ENCODE measurements at regions of chr20 and their contacts with region 1.

Region 1: DNA sequence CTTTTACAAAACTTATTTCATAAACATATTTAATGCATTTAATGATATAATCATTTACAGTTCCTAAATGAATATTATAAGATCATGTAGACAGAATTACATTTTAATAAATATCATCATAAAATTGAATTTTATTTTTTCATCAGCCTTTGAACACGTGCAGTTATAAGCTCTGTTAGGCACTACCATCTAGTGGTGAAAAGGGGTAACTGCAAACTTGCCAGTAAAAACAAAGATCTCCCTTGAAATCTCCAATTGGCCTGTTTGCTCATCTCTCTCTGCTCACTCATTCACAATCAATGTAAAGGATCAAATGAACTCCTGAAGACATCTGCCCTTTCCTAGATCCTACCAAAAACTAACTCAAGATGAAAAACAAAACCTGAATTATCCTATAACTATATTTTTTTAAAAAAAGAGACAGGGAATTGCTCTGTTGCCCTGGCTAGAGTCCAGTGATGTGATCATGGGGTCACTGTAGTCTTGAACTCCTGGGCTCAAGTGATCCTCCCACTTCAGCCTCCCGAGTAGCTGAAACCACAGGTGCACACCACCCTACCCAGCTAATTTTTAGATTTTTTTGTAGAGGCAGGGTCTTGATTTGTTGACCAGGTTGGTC is 31.7 kb downstream of the SAMHD1 start:
- DNase-seq: peak in 14 of 35 experiments; percentile 5 to 77 (median 26)
- ATAC-seq: peak; percentile 71 to 89 (median 78)
- H3K4me3 ChIP-seq: no peak overlapping the region
- H3K4me3 Mint-ChIP-seq: no peak overlapping the region
- H3K27ac ChIP-seq: no peak overlapping the region
- H3K27ac Mint-ChIP-seq: peak overlapping the region; percentile 68 to 92
- H3K4me1 ChIP-seq: peaks cover 2 to 23% of the 10 kb centered on the region in 2 experiments
- H3K4me1 Mint-ChIP-seq: peaks cover 15 to 27% (median 22%) of the 10 kb centered on the region in 3 donors
- H3K27me3 ChIP-seq: no peaks in the 10 kb centered on the region
- H3K27me3 Mint-ChIP-seq: no peaks in the 10 kb centered on the region

Region 2: DNA sequence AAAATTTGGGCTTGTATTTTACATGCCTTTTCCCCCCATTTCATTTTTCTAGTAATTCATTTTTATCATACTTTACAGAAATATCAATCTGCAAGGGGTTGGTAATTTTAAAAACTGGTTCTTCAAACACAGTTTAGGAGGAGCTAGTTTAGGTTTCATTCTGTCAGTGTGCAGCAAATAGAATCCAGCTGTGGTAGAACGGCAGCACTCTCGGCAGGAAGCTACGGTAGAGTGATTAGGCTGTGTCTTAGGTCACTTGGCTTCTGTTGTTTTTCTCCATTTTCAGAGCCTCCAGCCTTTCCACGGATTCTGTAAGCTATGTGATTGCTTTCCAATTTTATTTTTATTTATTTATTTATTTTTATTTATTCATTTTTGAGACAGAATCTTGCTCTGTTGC is 11.2 kb before region 1 on chr20:
- CTCF ChIA-PET with region 1: interaction called, 3 to 11 read pairs
- POLR2A ChIA-PET with region 1: interaction called, 3 read pairs
- DNase-seq: no peak
- ATAC-seq: no peak
- H3K4me3 ChIP-seq: no peak overlapping the region
- H3K4me3 Mint-ChIP-seq: no peak overlapping the region
- H3K27ac ChIP-seq: no peak overlapping the region
- H3K27ac Mint-ChIP-seq: peak overlapping the region in 1 of 2 donors; percentile 2
- H3K4me1 ChIP-seq: no peaks in the 10 kb centered on the region
- H3K4me1 Mint-ChIP-seq: peaks cover 15 to 19% (median 15%) of the 10 kb centered on the region in 3 donors
- H3K27me3 ChIP-seq: no peaks in the 10 kb centered on the region
- H3K27me3 Mint-ChIP-seq: no peaks in the 10 kb centered on the region

Region 3: DNA sequence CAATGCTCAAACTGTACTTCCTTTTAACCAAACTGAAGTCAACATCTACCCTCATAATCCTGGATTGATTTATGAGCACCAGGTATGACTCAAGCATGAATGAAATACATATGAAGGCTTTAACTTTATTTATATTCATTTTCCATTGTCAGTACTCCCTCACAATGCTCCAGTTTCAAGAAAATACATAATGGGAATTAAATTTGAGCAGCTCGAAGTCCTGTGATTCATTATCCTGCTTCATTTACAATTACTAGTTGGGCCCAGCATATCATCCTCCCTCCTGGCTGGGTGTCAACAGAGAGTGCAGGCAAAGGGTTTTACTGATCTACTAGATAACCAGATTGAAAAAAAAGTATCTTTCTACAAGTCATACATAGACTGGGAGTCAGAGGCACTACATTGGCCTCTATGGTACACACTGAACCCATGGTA is 21.6 kb after region 1 on chr20:
- CTCF ChIA-PET with region 1: interaction called, 5 to 7 read pairs
- POLR2A ChIA-PET with region 1: interaction called, 13 to 14 read pairs
- DNase-seq: peak in 1 of 35 experiments; percentile 17
- ATAC-seq: peak in 3 of 4 experiments; percentile 24 to 65 (median 58)
- H3K4me3 ChIP-seq: no peak overlapping the region
- H3K4me3 Mint-ChIP-seq: peak overlapping the region; percentile 43 to 63 (median 63)
- H3K27ac ChIP-seq: peak overlapping the region; percentile 65
- H3K27ac Mint-ChIP-seq: peak overlapping the region; percentile 91 to 94
- H3K4me1 ChIP-seq: peaks cover 41 to 83% of the 10 kb centered on the region in 2 experiments
- H3K4me1 Mint-ChIP-seq: peaks cover 76 to 89% (median 78%) of the 10 kb centered on the region in 3 donors
- H3K27me3 ChIP-seq: no peaks in the 10 kb centered on the region
- H3K27me3 Mint-ChIP-seq: no peaks in the 10 kb centered on the region